ENCODE measurements at regions of chr17 and their contacts with region 1.

Region 1: GRCh38 chr17:72725433-72726068 is 366.9 kb downstream of the SLC39A11 start:
- DNase-seq: peak; percentile 46
- ATAC-seq: no peak
- H3K4me3 ChIP-seq: no peak overlapping the region
- H3K4me3 Mint-ChIP-seq: no peak overlapping the region
- H3K27ac ChIP-seq: no peak overlapping the region
- H3K27ac Mint-ChIP-seq: no peak overlapping the region
- H3K4me1 ChIP-seq: peaks cover 14 to 16% of the 10 kb centered on the region in 2 donors
- H3K4me1 Mint-ChIP-seq: peaks cover 25% of the 10 kb centered on the region
- H3K27me3 ChIP-seq: no peaks in the 10 kb centered on the region
- H3K27me3 Mint-ChIP-seq: no peaks in the 10 kb centered on the region
- CTCF ChIP-seq: peak; percentile 76

Region 2: GRCh38 chr17:72850410-72851118 is 125.0 kb after region 1 on chr17:
- CTCF ChIA-PET with region 1: no interaction called
- POLR2A ChIA-PET with region 1: no interaction called
- intact Hi-C with region 1: no loop called
- DNase-seq: no peak
- ATAC-seq: no peak
- H3K4me3 ChIP-seq: no peak overlapping the region
- H3K4me3 Mint-ChIP-seq: no peak overlapping the region
- H3K27ac ChIP-seq: no peak overlapping the region
- H3K27ac Mint-ChIP-seq: no peak overlapping the region
- H3K4me1 ChIP-seq: no peaks in the 10 kb centered on the region
- H3K4me1 Mint-ChIP-seq: no peaks in the 10 kb centered on the region
- H3K27me3 ChIP-seq: no peaks in the 10 kb centered on the region
- H3K27me3 Mint-ChIP-seq: no peaks in the 10 kb centered on the region
- CTCF ChIP-seq: no peak

Region 3: DNA sequence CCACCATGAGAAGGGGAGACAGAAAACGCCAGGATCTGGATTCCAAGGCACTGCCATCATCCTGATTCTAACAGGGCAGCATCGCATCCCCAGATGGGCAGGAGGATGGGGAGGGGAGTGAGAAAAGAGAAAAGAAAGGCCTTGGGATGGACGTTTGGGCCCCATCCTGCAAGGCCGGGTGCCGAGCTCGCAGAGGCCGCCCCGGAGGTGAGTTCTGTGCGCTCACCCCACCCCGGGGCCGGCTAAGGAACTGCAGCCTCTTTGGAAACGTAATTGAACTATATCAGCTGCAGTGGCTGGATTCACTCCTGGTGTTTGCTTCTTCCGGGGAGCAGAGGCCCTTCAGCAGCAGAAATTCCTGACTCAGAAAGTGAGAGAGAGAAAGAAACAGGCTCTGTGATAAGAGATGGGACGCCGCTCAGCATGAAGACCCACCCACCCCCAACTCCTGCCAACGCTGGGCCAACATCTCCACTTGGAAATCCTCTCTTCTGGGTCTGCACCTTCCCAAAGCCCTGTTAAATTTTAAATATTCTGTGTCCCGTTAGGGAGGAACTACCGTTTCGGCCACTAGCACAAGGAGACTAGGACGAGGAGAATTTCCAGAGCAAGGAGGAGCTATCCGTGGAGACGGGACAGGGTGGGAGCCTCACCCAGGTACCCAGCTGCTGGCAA is 430.8 kb after region 1 on chr17:
- CTCF ChIA-PET with region 1: interaction called, 136 read pairs
- POLR2A ChIA-PET with region 1: interaction called, 5 read pairs
- intact Hi-C with region 1: no loop called
- DNase-seq: peak; percentile 61
- ATAC-seq: peak; percentile 67
- H3K4me3 ChIP-seq: no peak overlapping the region
- H3K4me3 Mint-ChIP-seq: no peak overlapping the region
- H3K27ac ChIP-seq: no peak overlapping the region
- H3K27ac Mint-ChIP-seq: no peak overlapping the region
- H3K4me1 ChIP-seq: peaks cover 5 to 13% of the 10 kb centered on the region in 2 donors
- H3K4me1 Mint-ChIP-seq: peaks cover 11% of the 10 kb centered on the region
- H3K27me3 ChIP-seq: peaks cover 0 to 30% (median 8%) of the 10 kb centered on the region in 4 experiments
- H3K27me3 Mint-ChIP-seq: peaks cover 31% of the 10 kb centered on the region
- CTCF ChIP-seq: peak; percentile 84

Region 4: DNA sequence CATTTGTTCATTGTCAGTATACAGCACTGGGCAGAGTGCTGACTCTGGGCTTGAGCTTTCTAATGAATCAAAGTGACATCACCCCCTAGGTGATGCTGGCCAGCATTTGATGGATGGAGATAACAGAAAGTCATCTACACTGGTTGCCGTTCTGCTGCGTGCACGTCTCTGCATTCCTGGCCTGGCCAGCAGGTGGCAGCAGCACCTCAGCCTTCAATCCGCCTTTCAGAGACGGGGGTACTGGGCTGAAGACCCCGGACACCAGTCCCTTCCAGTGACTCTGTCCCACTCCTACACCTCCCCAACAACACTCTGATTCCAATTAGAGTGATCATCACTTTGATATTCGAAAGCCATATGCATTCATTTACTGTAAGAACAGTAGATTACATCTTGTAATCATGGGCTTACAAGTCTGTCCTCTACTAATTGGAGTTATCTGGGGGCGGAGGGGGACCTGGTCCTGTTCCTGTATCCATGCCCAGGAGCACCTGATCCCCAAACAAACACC is 530.2 kb after region 1 on chr17:
- CTCF ChIA-PET with region 1: interaction called, 22 read pairs
- POLR2A ChIA-PET with region 1: no interaction called
- intact Hi-C with region 1: loop called (anchors 1 kb)
- DNase-seq: peak; percentile 70
- ATAC-seq: peak; percentile 65
- H3K4me3 ChIP-seq: no peak overlapping the region
- H3K4me3 Mint-ChIP-seq: no peak overlapping the region
- H3K27ac ChIP-seq: no peak overlapping the region
- H3K27ac Mint-ChIP-seq: no peak overlapping the region
- H3K4me1 ChIP-seq: no peaks in the 10 kb centered on the region
- H3K4me1 Mint-ChIP-seq: peaks cover 1% of the 10 kb centered on the region
- H3K27me3 ChIP-seq: peaks cover 0 to 3% (median 0%) of the 10 kb centered on the region in 4 experiments
- H3K27me3 Mint-ChIP-seq: no peaks in the 10 kb centered on the region
- CTCF ChIP-seq: peak; percentile 99

Region 5: DNA sequence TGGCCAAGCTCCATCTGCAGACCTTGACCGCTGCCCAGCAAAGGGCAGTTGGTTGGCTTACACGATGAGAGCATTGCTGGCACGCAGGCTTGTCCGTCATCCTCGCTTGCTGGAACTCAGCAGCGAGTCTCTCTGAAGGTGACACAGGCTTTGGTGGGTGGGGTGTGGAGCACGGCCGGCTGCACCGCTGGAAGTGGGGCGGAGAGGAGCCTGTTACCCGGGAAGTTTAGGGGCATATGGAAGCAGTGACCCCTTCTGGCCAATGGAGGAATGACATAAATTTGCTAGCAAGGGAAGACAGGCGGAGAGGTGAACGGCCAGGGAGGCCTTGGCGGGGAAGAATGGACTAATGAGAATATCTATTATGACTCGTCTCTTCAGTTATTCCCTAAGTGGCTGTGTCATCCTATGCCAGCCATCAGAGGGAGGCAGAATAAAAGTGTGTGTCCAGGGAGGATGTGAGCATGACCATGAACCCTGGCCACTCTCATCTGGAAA is 984.6 kb after region 1 on chr17:
- CTCF ChIA-PET with region 1: interaction called, 4 read pairs
- POLR2A ChIA-PET with region 1: no interaction called
- intact Hi-C with region 1: loop called (anchors 5 kb)
- DNase-seq: peak; percentile 77
- ATAC-seq: peak; percentile 61
- H3K4me3 ChIP-seq: no peak overlapping the region
- H3K4me3 Mint-ChIP-seq: no peak overlapping the region
- H3K27ac ChIP-seq: no peak overlapping the region
- H3K27ac Mint-ChIP-seq: no peak overlapping the region
- H3K4me1 ChIP-seq: peaks cover 19 to 28% of the 10 kb centered on the region in 2 donors
- H3K4me1 Mint-ChIP-seq: peaks cover 22% of the 10 kb centered on the region
- H3K27me3 ChIP-seq: peaks cover 0 to 11% (median 3%) of the 10 kb centered on the region in 4 experiments
- H3K27me3 Mint-ChIP-seq: peaks cover 17% of the 10 kb centered on the region
- CTCF ChIP-seq: peak; percentile 81

Measured in B cell (primary cell).